ENCODE measurements at regions of chr14 and their contacts with region 1.

Region 1: GRCh38 chr14:22556990-22557623 is 31.9 kb downstream of the DAD1 start:
- H3K4me3 ChIP-seq: peak overlapping the region; percentile 39
- H3K27ac ChIP-seq: peak overlapping the region; percentile 28; the same call in 1 of the 2 replicates
- H3K4me1 ChIP-seq: peaks cover 3% of the 10 kb centered on the region; the same call in 1 of the 2 replicates
- CTCF ChIP-seq: peak; percentile 95

Region 2: GRCh38 chr14:22226381-22226780 is 330.7 kb before region 1 on chr14:
- CTCF ChIA-PET with region 1: no interaction called
- POLR2A ChIA-PET with region 1: no interaction called
- H3K4me3 ChIP-seq: no peak overlapping the region
- H3K27ac ChIP-seq: no peak overlapping the region
- H3K4me1 ChIP-seq: no peaks in the 10 kb centered on the region
- CTCF ChIP-seq: no peak

Region 3: GRCh38 chr14:22386924-22387775 is 170.0 kb before region 1 on chr14:
- CTCF ChIA-PET with region 1: interaction called, 39 read pairs
- POLR2A ChIA-PET with region 1: no interaction called
- H3K4me3 ChIP-seq: no peak overlapping the region
- H3K27ac ChIP-seq: no peak overlapping the region
- H3K4me1 ChIP-seq: no peaks in the 10 kb centered on the region
- CTCF ChIP-seq: peak; percentile 69

Region 4: DNA sequence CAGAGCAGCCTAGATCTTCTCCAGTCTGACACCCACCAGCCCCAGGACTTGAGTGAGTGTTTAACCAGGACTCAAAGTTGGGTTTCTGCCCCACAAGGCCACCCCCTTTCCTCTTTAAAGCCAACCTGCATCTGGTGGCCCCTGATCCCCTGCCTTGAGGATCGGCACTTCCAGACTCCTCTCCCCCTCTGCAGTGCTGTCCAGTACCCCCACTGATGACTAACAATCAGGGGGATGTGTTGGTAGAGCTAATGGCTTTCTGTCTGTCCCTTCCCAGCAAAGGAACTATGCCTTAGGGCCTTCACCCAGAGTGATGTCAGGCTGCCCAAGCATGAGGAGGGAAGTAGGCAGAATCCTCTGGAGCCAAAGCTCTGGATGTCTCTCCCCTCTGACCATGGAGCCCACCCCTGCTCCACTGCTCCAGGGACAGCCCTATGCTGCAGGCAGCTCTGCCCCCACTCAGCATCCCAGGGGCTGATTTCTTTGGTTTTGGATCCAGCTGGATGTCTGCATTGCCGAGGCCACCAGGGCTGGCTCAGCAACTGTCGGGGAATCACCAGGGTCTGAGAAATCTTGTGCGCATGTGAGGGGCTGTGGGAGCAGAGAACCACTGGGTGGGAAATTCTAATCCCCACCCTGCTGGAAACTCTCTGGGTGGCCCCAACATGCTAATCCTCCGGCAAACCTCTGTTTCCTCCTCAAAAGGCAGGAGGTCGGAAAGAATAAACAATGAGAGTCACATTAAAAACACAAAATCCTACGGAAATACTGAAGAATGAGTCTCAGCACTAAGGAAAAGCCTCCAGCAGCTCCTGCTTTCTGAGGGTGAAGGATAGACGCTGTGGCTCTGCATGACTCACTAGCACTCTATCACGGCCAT is 11.0 kb before region 1 on chr14:
- CTCF ChIA-PET with region 1: interaction called, 30 read pairs
- POLR2A ChIA-PET with region 1: interaction called, 3 read pairs
- H3K4me3 ChIP-seq: no peak overlapping the region
- H3K27ac ChIP-seq: no peak overlapping the region
- H3K4me1 ChIP-seq: no peaks in the 10 kb centered on the region
- CTCF ChIP-seq: no peak

Region 5: DNA sequence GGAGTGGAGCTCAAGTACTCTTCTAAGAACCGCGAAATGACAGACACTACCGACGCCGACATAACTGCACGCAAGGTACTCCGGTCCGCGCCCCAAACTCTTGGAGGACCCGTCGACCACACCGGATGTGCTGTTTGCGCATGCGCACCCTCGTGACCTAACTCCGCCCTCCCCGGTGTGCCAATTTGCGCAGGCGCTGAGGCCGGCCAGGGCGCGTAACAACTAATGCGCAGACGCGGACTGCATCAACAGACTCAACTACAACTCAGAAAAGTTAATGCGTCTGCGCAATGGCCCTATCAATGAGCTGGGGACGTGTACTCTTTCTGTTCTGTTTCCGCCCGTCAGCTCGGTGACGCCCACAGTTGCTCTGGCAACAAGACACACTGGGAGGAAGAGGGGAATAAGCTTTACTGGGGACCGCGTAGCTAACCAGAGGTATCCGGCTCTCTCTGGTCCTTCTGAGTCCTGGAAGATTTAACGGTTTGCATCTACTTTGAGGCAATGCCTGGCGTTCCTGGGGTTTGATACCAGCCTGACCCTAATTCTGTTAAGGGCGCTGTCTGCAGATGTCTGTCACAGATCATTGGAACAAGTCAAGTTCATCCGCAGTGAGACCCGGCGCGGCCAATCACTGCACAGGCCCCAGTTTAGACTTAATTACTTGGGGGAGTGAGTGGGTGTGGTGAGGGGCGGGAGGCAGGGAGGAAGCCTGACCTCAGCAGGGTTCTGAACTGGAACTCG is 32.2 kb after region 1 on chr14 and contains the start of gene DAD1:
- CTCF ChIA-PET with region 1: interaction called, 10 read pairs
- POLR2A ChIA-PET with region 1: interaction called, 3 read pairs
- H3K4me3 ChIP-seq: peak within 1 kb of the TSS; percentile 87
- H3K27ac ChIP-seq: peak within 1 kb of the TSS; percentile 49; the same call in 1 of the 2 replicates
- H3K4me1 ChIP-seq: no peaks in the 10 kb centered on the region
- CTCF ChIP-seq: no peak; the same call in 1 of the 2 replicates

Region 6: DNA sequence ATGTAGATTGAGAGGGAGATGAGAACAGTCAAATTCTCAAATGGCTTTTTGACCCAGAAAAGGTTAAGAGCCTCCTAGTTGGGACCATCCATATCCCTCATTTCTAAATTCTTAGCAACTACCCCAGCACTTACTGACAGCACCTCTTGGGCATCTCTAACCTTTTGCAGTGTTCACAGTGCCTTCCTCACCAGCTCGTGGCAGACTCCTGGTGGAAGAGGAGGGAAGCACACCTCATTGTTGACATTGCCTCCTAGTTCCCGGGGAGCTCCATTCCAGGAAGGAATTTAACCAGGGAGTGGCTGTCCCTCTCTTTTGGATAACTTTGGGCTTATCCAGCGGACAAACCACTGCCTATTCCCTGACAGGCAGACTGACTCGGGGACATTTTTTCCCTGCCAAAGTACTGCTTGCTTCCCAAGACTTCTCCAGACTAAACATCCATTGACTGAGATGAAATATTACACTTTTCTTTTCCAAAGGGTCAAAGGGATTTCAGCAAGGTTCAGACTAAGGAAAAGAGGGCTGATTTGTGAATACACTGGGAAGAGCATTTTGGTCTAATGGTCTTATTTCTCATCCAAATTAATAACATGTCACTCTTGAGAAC is 96.0 kb after region 1 on chr14:
- CTCF ChIA-PET with region 1: interaction called, 27 read pairs
- POLR2A ChIA-PET with region 1: no interaction called
- H3K4me3 ChIP-seq: no peak overlapping the region
- H3K27ac ChIP-seq: no peak overlapping the region
- H3K4me1 ChIP-seq: peaks cover 5% of the 10 kb centered on the region; the same call in 1 of the 2 replicates
- CTCF ChIP-seq: peak; percentile 58

Region 7: DNA sequence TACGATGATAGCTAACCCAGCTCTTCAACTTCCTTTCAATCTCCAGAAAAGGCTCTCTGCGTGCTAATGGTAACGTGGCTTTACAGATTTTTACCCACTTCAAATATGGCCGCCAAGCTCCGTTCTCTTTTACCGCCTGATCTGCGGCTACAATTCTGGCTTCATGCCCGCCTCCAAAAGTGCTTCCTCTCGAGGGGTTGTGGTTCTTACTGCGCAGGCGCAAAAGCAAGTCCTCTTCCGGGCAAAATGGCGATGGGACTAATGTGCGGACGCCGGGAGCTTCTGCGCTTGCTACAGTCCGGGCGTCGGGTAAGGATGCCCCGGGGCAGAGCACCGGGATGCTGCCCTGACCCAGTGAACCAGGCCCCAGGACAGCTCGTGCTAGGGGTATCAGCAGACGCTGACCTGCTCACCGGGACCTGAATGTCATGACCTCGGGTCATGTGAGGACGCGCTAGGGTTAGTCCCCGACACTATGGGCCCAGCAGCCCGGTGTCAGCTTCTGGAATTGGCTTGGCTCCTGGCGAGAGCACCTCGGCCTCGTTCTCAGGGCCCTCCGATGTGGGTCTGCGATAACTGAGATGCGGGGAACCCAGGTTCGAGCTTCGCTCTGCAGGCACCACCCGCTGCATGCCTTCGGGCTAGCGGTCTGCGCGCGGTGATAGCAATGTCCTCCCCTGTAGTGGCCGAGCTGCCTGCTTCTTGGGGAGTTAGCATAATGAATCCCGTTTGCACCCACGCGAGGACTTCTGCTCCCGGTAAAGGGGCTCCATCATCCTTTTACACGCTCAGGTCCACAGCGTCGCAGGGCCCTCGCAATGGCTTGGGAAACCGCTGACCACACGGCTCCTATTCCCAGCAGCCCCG is 209.6 kb after region 1 on chr14 and contains the start of gene OXA1L:
- CTCF ChIA-PET with region 1: interaction called, 13 read pairs
- POLR2A ChIA-PET with region 1: no interaction called
- H3K4me3 ChIP-seq: peak within 1 kb of the TSS; percentile 94
- H3K27ac ChIP-seq: peak within 1 kb of the TSS; percentile 58
- H3K4me1 ChIP-seq: no peaks in the 10 kb centered on the region; the same call in 1 of the 2 replicates
- CTCF ChIP-seq: no peak

Region 8: GRCh38 chr14:22822571-22823098 is 265.5 kb after region 1 on chr14:
- CTCF ChIA-PET with region 1: interaction called, 16 read pairs
- POLR2A ChIA-PET with region 1: no interaction called
- H3K4me3 ChIP-seq: peak overlapping the region; percentile 15
- H3K27ac ChIP-seq: no peak overlapping the region
- H3K4me1 ChIP-seq: peaks cover 2% of the 10 kb centered on the region; the same call in 1 of the 2 replicates
- CTCF ChIP-seq: peak; percentile 68

Measured in HEK293 (cell line).